CD14-positive monocyte (primary cell): ENCODE measurements at regions of chr3 and their contacts with region 1.

Region 1: DNA sequence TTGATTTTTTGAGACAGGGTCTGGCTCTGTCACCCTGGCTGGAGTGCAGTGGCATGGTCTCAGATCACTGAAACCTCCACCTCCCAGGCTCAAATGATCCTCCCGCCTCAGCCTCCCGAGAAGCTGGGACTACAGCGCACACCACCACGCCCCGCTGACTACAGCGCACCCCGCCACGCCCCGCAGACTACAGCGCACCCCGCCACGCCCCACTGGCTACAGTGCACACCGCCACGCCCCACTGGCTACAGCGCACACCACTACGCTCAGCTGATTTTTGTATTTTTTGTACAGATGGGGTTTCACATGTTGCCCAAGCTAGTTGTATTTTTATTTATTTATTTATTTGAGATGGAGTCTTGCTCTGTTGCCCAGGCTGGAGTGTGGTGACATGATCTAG is 35.6 kb downstream of the SLC51A start:
- DNase-seq: no peak
- H3K4me3 ChIP-seq: no peak overlapping the region
- H3K4me3 Mint-ChIP-seq: no peak overlapping the region
- H3K27ac ChIP-seq: no peak overlapping the region
- H3K27ac Mint-ChIP-seq: peak overlapping the region in 2 of 7 donors; percentile 7 to 46
- H3K4me1 ChIP-seq: no peaks in the 10 kb centered on the region
- H3K4me1 Mint-ChIP-seq: peaks cover 5% of the 10 kb centered on the region
- H3K27me3 ChIP-seq: no peaks in the 10 kb centered on the region
- H3K27me3 Mint-ChIP-seq: no peaks in the 10 kb centered on the region
- CTCF ChIP-seq: no peak

Region 2: DNA sequence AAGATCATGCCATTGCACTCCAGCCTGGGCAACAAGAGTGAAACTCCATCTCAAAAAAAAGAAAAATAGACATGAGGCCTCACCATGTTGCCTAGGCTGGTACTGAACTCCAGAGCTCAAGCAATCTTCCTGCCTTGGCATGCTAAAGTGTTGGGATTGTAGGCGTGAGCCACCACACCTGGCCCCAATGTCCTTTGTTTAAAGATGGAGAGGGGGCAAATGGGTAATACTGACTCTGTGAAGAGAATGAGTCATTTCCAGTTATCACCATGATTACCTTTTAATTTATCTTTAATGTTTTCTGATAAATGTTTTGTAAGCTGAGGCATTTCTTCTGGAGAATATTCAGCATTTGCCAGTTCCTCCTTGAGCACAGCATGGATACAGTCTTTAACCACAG is 63.9 kb after region 1 on chr3:
- intact Hi-C with region 1: no loop called
- DNase-seq: no peak
- H3K4me3 ChIP-seq: no peak overlapping the region
- H3K4me3 Mint-ChIP-seq: no peak overlapping the region
- H3K27ac ChIP-seq: no peak overlapping the region
- H3K27ac Mint-ChIP-seq: no peak overlapping the region
- H3K4me1 ChIP-seq: peaks cover 4 to 14% of the 10 kb centered on the region in 2 donors
- H3K4me1 Mint-ChIP-seq: peaks cover 16% of the 10 kb centered on the region
- H3K27me3 ChIP-seq: no peaks in the 10 kb centered on the region
- H3K27me3 Mint-ChIP-seq: peaks cover 0 to 1% (median 1%) of the 10 kb centered on the region in 3 donors
- CTCF ChIP-seq: no peak

Region 3: DNA sequence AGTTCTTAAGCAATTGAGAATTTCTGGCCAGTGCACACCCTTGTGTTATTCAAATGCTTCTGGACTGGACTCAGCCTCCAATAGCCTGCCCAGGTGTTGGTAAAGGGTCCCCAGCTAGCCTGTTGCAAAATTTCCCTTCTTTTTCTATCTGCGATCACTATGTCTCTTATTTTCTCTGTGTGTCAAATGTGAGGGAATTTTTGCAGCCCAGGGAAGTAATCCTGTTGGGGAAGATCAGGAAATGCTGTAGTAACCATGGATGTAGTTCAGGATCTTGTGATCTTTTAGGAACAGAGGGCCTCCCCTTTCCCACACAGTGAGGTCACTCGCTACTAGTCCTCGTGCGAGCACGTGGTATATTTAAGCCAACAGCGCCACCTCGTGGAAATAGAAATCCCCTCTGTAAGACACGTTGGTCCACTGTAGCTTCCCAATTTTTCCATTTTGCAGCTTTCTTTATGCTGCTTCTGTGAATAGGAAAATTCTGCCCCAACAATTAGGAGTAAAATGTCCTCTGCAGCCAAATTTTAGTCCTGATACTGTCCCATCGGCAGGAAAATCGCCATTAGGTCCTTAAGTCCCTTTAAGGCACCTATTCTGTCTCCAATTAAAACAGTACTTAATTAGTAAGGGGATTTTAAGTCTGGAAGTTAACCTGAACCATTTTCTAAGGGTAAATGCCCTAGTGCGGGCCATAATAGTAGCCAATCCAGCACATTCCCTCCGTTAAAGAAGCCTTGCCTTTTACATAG is 267.2 kb after region 1 on chr3:
- intact Hi-C with region 1: loop called in 1 of 2 experiments (anchors 5 kb)
- DNase-seq: peak; percentile 30 to 50 (median 39)
- H3K4me3 ChIP-seq: peak overlapping the region in 1 of 3 experiments; percentile 25
- H3K4me3 Mint-ChIP-seq: no peak overlapping the region
- H3K27ac ChIP-seq: no peak overlapping the region
- H3K27ac Mint-ChIP-seq: no peak overlapping the region
- H3K4me1 ChIP-seq: no peaks in the 10 kb centered on the region
- H3K4me1 Mint-ChIP-seq: no peaks in the 10 kb centered on the region
- H3K27me3 ChIP-seq: no peaks in the 10 kb centered on the region
- H3K27me3 Mint-ChIP-seq: peaks cover 0 to 1% (median 0%) of the 10 kb centered on the region in 3 donors
- CTCF ChIP-seq: peak; percentile 33